MCF 10A (cell line): ENCODE measurements at regions of chr7 and their contacts with region 1.

Region 1: GRCh38 chr7:107924841-107925504 is 34.0 kb downstream of the DLD start:
- DNase-seq: peak; percentile 74
- H3K4me3 Mint-ChIP-seq: no peak overlapping the region
- H3K27ac Mint-ChIP-seq: peak overlapping the region; percentile 73
- H3K4me1 Mint-ChIP-seq: peaks cover 15% of the 10 kb centered on the region
- H3K27me3 Mint-ChIP-seq: no peaks in the 10 kb centered on the region
- CTCF ChIP-seq: no peak

Region 2: GRCh38 chr7:107902381-107902780 is 22.6 kb before region 1 on chr7:
- CTCF ChIA-PET with region 1: no interaction called
- POLR2A ChIA-PET with region 1: no interaction called
- intact Hi-C with region 1: no loop called
- DNase-seq: no peak
- H3K4me3 Mint-ChIP-seq: no peak overlapping the region
- H3K27ac Mint-ChIP-seq: no peak overlapping the region
- H3K4me1 Mint-ChIP-seq: peaks cover 10% of the 10 kb centered on the region
- H3K27me3 Mint-ChIP-seq: no peaks in the 10 kb centered on the region
- CTCF ChIP-seq: no peak

Region 3: DNA sequence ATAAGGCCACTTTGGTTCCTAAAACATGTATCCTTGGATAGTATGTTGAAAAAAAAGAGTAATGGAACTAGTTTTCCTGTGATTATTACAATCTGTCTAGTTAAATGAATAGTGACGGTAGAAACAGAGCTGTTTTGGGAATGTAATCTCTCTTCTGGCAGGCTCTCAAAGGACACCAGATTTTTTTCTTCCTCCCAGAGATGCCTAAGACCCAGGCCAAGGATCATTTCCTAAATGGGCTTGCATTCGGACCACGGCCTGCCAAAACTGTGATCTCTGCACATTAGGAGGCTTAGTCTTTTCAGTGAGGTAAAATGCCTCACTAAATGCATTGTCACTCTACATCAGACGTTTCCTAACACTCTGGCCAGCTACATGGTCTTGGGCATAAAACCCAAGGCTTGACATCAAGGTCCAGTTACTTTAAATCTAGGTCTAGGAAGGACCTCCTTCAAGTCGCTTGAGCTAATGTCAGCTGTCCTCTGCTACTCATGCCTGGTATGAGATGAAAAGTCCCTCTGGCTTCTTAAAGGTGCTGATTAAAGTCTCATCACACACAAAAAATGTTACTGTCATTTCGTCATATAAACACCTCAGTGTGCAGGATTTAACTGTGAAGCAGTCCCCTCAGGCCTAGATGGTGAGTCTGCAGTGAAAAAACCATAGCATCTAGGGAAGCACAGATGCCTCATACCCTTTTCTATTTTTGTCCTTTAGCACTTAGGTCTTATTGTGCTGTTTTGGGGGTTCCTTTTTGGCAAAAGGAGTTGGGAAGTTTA is 13.7 kb after region 1 on chr7:
- CTCF ChIA-PET with region 1: no interaction called
- POLR2A ChIA-PET with region 1: interaction called, 13 read pairs
- intact Hi-C with region 1: no loop called
- DNase-seq: no peak
- H3K4me3 Mint-ChIP-seq: no peak overlapping the region
- H3K27ac Mint-ChIP-seq: no peak overlapping the region
- H3K4me1 Mint-ChIP-seq: peaks cover 12% of the 10 kb centered on the region
- H3K27me3 Mint-ChIP-seq: no peaks in the 10 kb centered on the region
- CTCF ChIP-seq: no peak

Region 4: DNA sequence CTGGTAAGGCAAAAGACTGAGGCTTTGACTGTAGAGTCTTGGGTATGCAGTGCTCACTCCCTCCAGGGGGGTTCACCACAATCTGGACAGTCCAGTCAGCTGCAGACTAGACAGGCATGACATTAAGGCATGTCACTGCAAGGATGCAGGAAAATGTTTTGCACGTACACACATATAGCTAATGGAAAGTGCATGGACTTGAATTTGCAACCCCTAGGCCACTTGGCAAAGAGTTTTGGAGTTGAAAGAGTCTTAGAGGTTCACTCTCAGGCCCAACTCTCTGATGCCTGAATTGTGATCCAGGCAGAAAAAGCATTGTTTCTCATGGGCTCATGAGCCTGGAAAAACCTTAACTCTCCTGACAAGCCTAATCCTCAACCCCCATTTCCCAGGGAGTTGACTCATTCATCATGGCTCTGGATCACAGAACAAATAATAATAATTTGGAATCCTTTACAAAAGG is 153.3 kb after region 1 on chr7:
- CTCF ChIA-PET with region 1: no interaction called
- POLR2A ChIA-PET with region 1: no interaction called
- intact Hi-C with region 1: no loop called
- DNase-seq: no peak
- H3K4me3 Mint-ChIP-seq: no peak overlapping the region
- H3K27ac Mint-ChIP-seq: no peak overlapping the region
- H3K4me1 Mint-ChIP-seq: peaks cover 22% of the 10 kb centered on the region
- H3K27me3 Mint-ChIP-seq: no peaks in the 10 kb centered on the region
- CTCF ChIP-seq: no peak